PC-9 (cell line): ENCODE measurements at regions of chr2 and their contacts with region 1.

Region 1: DNA sequence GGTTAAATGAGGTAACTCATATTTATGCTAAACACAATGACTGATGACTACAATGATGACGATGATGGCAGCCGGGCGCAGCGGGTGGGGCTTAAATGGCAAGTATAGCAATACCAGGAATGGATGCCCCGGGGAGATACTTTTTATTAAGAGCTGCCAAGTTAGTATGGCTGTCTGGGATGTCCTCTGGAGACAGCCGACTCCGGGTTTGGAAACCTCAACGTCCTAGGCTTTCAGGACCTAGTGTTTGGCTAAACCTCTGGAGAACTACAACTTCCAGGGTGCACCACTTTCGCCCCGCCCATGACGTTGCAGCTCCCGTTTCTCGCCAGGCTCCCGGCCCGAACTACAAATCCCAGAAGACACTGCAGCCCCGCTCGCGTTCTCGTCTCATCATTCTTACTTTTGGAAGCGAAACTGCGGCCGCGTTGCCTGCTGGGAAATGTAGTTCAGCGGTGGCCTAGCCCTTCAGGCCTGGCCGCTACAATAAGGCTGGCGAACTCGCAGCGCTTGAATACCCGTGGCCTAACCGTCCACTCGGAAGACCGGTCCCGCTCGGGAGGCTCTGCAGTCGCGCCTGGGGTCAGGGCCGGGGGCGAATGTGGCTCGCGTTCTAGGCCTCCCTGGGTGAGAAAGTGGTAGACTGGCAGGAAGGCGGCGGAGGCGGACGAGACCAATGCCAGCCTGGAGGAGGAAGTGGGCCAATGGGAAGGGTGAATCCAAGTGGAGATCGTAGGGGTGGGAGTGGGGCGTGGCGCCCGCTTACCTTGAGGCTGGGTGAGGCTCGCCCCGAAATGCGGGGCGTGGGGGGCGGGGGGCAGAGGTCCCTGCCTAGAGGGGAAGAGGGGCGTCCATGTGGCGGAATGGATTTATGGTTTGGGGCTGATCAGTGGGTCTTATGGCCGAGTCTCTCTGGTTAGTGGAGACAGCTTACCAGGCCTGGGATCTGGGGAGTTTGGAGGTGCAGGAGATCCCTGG is at the start of gene SMARCAL1:
- DNase-seq: peak; percentile 93 to 97
- H3K4me3 ChIP-seq: peak within 1 kb of the TSS; percentile 81
- H3K27ac ChIP-seq: peak within 1 kb of the TSS; percentile 57
- H3K4me1 ChIP-seq: 0 out of 2 replicates have a peak, but pooled peaks cover 11% of the 10 kb centered on the region
- H3K27me3 ChIP-seq: no peaks in the 10 kb centered on the region
- CTCF ChIP-seq: no peak
- total RNA-seq, gene SMARCAL1: 39.7 and 40.5 TPM in 2 replicates

Region 2: DNA sequence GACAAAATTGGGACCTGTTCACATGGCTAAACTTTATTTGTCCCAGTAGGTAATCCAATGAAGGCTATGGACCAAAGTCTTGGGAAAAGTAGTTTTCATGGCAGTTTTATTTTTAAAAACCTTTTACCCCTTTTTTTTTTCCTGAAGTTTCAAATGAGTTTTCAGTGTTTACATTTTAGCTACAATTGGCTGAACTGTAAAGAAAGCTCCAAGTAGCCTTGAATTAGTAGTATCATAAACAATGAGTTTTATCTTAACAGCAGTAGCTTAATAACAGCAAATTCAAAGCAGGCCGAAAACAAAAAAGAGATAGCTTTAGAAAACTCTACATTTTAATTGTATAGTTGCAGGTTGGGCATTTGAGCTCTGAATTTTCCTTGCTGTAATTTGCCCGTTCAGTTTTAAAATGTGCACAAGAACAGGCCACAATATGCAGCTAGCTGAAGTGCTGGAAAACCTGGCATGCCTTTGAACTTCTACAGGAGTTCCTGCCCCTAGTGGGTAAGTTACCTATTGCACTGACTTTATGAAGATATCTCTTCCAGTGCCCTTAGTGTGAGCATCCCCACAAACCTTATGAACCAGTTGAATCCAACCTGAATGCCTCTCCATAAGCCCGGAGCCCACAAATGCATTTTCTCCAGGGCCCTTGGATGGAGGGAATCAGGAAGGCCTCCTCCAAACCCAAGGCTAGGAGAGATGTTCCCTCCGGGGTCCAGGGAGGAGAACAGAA is 196.5 kb before region 1 on chr2:
- CTCF ChIA-PET with region 1: no interaction called
- POLR2A ChIA-PET with region 1: no interaction called
- intact Hi-C with region 1: loop called (anchors 5 kb)
- DNase-seq: no peak
- H3K4me3 ChIP-seq: no peak overlapping the region
- H3K27ac ChIP-seq: peak overlapping the region; percentile 38; the same call in 1 of the 2 replicates
- H3K4me1 ChIP-seq: peaks cover 57% of the 10 kb centered on the region
- H3K27me3 ChIP-seq: no peaks in the 10 kb centered on the region
- CTCF ChIP-seq: peak; percentile 41

Region 3: GRCh38 chr2:216315789-216316603 is 96.3 kb before region 1 on chr2:
- CTCF ChIA-PET with region 1: no interaction called
- POLR2A ChIA-PET with region 1: no interaction called
- intact Hi-C with region 1: loop called (anchors 2 kb)
- DNase-seq: peak; percentile 77 to 89
- H3K4me3 ChIP-seq: peak overlapping the region; percentile 50; the same call in 1 of the 2 replicates
- H3K27ac ChIP-seq: peak overlapping the region; percentile 90
- H3K4me1 ChIP-seq: peaks cover 32% of the 10 kb centered on the region
- H3K27me3 ChIP-seq: no peaks in the 10 kb centered on the region
- CTCF ChIP-seq: no peak

Region 4: DNA sequence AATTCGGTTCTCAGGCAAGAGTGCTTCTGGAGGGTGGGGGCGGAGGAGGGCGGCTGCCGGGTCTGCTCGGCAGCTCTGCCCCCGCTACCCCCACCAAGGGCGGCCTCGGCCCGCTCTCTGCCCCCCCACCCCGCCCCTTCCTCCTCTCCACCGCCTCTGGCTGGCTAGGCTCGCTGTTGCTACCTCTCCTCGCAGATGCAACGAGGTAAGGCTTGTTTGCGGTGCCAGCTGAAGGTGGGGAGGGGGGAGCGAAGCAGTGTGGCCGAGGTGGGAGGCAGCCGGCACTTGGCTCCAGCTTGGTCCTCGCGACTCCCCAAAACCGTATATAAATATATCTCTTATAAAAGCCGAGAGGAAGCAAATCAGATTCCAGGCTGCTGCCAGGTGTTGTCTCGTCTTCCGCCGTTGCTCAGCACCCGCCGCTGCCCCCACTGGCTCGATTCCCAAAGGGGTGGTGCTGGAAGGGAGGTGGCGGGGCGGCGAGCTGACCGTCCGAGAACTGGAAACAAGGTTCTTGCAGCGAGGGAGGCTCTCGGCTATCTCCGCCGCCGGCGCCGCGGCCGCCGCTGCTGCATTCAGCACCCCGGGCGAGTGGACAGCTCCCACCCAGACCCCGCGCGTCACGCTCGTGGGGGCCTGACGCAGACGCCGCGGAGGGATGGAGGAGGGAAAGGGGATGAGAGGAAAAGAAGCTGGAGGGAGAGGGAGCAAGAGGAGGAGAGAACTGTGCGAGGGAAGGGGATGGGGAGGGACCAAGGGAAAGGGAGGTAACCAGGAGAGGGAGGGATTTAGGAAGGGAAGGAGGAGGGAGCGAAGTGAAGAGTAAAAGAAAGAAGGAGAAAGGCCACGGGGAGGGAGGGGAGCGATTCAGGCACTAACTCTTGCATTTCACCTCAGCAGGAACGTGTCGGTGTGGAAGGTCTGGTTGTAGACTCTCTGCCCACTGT is 40.3 kb before region 1 on chr2 and contains the start of gene MARCHF4:
- CTCF ChIA-PET with region 1: no interaction called
- POLR2A ChIA-PET with region 1: interaction called, 6 read pairs
- intact Hi-C with region 1: loop called (anchors 1 kb)
- DNase-seq: peak; percentile 64 to 85
- H3K4me3 ChIP-seq: peak within 1 kb of the TSS; percentile 72
- H3K27ac ChIP-seq: peak within 1 kb of the TSS; percentile 90
- H3K4me1 ChIP-seq: peaks cover 39% of the 10 kb centered on the region
- H3K27me3 ChIP-seq: no peaks in the 10 kb centered on the region
- CTCF ChIP-seq: no peak
- total RNA-seq, gene MARCHF4: 7.7 and 14.5 TPM in 2 replicates

Region 5: GRCh38 chr2:216539714-216540241 is 127.5 kb after region 1 on chr2:
- CTCF ChIA-PET with region 1: no interaction called
- POLR2A ChIA-PET with region 1: no interaction called
- intact Hi-C with region 1: no loop called
- DNase-seq: peak; percentile 85 to 88
- H3K4me3 ChIP-seq: no peak overlapping the region
- H3K27ac ChIP-seq: peak overlapping the region; percentile 60
- H3K4me1 ChIP-seq: peaks cover 52% of the 10 kb centered on the region
- H3K27me3 ChIP-seq: no peaks in the 10 kb centered on the region
- CTCF ChIP-seq: no peak